BJ (cell line): ENCODE measurements at regions of chr3 and their contacts with region 1.

Region 1: GRCh38 chr3:151146071-151146730 is 56.8 kb downstream of the GPR171 start:
- DNase-seq: peak; percentile 33
- H3K4me3 ChIP-seq: no peak overlapping the region
- H3K27me3 ChIP-seq: peaks cover 15% of the 10 kb centered on the region
- CTCF ChIP-seq: peak; percentile 90

Region 2: DNA sequence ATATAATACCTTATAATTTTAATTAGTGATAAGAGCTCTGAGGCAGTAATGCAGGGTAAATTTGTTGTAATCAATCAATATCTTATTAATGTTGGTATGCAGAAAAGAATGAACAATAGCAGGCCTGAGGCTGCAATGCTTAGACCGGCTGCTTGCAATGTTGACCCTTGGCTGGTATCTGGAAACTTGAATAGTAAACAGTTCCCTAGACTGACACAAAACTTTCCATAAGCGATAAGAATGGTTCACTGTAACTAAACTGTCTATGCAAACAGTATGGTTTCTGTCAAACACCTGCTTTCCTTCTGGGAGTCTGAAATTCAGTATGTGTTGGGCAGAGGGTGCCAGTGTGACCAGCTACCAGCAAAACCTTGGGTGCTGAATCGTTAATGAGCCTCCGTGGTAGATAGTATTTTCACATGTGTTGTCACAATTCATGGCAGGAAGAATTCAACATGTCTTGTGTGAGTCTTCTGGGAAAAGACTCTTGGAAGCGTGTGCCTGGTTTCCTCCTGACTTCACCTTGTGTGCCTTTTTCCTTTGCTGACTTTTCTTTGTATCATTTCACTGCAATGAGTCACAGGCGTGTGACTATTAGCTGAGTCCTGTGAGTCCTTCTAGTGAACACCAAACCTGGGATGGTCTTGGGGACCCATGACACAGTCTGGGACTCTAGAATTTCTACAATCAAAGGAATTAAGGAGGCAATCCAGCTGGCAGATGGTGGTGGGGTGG is 143.0 kb before region 1 on chr3:
- CTCF ChIA-PET with region 1: interaction called, 103 read pairs
- POLR2A ChIA-PET with region 1: no interaction called
- DNase-seq: no peak
- H3K4me3 ChIP-seq: no peak overlapping the region
- H3K27me3 ChIP-seq: no peaks in the 10 kb centered on the region; the same call in 1 of the 2 replicates
- CTCF ChIP-seq: no peak

Region 3: GRCh38 chr3:151008699-151009098 is 137.5 kb before region 1 on chr3:
- CTCF ChIA-PET with region 1: interaction called, 103 read pairs
- POLR2A ChIA-PET with region 1: no interaction called
- DNase-seq: no peak
- H3K4me3 ChIP-seq: no peak overlapping the region
- H3K27me3 ChIP-seq: no peaks in the 10 kb centered on the region; the same call in 1 of the 2 replicates
- CTCF ChIP-seq: peak; percentile 60

Region 4: DNA sequence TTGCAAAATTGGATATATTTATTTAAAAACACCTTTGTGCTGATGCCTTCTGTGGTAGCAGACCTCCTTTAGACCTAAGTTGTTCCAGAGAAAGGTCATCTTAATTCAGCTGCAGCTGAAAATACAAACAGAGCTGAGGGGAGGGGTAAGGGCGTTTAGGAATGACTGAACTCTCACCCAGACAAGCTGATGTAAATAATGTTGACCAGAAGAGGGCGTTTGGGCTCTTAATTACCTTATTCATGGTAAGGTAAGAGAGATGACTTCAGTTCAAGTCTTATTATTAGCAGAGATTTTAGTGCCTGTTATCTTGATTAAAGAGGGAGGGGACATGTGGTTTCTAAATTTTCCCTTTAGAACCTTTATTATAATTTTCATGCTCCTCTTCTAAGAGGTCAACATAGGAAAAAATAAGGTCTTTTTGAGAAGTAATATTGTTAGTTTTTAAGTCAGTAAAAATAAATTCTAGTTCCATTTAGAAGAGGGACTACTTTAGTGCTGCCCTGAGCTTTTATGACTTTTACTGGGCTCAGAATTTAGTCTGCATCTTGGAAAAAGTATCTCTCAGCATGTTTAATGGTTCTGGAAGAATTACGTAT is 10.5 kb after region 1 on chr3:
- CTCF ChIA-PET with region 1: interaction called, 11 read pairs
- POLR2A ChIA-PET with region 1: no interaction called
- DNase-seq: no peak
- H3K4me3 ChIP-seq: no peak overlapping the region
- H3K27me3 ChIP-seq: no peaks in the 10 kb centered on the region
- CTCF ChIP-seq: peak; percentile 61